Left cardiac atrium (tissue), 4 donors: ENCODE measurements at regions of chr10 and their contacts with region 1.

Region 1: DNA sequence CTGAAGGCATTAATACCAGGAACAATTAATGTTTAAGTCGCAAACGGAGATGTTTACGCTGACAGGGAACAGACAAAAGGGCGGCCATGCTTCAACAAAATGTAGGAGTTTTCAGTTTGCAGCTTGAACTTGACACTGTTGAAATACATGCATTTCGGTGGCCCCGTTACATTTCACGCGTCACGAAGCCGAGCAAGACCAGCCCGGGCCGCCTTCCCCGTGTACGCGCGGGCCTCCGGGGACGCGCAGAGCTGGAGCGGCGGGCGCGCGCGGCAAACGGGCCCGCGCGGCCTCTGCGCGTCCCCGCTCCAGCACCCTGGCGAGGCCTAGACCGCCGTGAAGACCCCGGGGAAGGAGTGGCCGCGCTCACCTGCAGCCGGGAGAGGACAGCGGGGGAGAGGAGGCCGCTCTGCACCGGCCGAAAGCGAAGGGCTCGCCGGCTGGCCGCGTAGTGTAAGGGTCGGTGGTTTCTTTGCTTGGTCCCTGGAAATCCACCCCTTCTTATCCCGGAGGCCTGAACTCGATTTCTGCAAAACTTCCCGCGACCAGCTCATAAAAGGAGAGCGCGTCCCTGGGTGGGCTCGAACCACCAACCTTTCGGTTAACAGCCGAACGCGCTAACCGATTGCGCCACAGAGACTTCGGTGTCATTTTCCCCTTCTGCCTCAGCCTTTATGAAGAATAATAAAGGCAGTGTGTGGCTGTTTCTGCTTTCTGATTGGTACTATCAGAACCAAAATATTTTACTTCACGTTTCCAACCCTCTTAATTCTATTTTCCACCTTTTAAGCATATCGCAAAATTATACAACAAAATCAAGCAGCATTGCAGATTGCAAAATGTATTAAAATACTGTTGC is 11.4 kb upstream of the EBLN1 start:
- DNase-seq: peak; percentile 87
- ATAC-seq: peak; percentile 99

Region 2: GRCh38 chr10:21919906-21920305 is 309.3 kb before region 1 on chr10:
- intact Hi-C with region 1: no loop called
- DNase-seq: no peak
- ATAC-seq: no peak

Region 3: DNA sequence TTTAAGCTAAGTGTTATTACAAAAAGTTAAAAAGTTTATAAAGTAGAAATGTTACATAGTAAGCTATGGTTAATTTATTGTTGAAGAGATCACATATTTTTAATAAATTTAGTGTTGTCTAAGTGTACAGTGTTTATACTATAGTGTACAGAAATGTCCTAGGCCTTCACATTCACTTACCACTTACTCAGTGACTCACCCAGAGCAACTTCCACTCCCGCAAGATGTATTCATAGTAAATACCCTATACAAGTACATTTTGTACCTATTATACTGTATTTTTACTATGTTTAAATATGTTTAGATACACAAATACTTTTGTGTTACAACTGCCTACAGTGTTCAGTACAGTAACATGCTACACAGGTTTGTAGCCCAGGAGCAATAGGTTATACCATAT is 294.9 kb before region 1 on chr10:
- intact Hi-C with region 1: no loop called
- DNase-seq: no peak
- ATAC-seq: no peak

Region 4: DNA sequence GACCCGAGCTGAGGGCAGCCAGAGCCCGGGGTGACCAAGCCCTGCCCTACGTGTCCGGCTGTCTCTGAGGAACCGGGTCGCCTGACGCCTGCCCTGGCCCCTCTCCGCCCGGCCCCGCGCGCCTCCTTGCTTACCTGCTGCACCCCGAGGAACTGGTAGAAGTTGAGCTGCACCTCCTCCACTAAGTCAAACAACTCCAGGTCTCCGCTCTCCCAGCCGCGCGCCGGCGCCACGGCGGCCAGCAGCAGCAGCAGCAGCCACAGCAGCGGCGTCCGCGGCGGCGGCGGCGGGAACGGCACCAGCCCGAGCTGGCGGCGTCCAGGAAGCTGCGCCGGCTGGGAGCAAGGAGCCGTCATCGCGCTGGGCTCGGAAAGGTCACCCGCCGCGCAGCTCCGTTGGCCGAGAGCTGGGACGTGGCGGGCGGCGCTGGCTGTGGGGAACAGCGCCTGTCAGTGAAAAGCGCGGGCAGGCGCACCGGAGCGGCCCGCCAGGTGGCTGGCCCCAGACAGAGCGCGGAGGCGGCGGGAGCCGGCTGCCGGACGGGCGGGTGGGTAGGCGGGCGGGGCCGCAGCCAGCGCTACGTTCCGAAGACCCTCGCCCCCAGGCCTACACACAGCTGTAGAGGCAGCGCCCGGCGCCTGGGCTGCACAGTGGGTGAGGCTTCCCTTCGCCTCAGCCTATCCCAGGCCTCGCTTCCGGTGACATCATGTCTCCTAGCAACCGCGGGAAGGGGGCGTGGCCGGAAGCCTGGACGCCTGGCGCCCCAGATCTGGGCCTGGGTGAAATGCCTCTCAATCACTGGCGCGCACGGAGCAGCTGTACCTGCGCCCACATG is 225.9 kb before region 1 on chr10 and contains the start of gene DNAJC1:
- intact Hi-C with region 1: loop called in 1 of 2 experiments (anchors 2 kb)
- DNase-seq: peak; percentile 98
- ATAC-seq: peak; percentile 99 to 100
- total RNA-seq, gene DNAJC1: 16.1 to 20.8 TPM